GM23248 (cell line): ENCODE measurements at regions of chr1 and their contacts with region 1.

Region 1: DNA sequence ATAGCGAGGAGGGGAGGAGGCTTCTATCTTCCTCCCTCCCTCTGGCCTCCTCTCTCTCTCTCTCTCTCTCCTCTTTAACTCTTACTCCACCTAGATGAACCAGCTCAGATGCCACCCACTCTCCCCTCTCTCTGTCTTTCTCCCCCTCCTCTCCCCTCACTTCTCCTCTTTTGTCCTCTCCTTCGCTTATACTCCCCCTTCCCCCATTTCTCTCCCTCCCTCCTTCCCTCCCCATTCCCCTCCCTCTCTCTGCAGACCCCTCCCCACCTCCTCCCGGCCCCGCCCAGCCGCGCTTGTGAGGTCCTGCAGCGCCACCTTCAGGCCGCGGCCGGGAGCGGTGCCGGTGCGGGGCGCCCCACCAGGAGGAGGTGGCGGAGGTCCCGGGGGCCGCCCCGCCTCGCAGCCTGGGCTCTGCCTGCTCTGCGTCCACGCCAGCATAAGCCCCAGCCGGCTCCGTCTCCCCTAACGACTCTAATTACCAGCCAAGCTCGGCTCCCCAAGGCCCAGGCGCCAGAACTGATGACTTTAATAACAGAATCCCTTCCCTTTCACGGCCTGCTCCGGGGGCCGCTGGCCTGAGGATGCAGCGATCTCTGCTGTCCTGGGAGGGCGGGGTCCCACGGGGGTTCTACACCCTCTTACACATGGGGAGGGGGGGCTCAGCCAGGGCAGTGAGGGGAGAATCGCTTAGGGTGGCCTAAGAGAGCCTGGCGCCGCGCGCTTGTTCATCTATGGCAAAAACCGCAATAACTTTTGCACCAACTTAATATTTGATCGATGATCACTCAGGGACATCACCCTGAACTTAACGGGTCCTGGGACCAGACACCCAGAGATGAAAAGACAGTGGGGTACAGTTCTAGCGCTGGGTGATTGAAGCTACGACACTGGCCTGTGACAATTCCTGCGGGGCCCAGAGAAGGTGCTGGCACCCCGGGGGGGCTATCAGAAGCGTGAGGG is 637.3 kb downstream of the MATN1 start:
- DNase-seq: peak; percentile 50
- H3K4me3 ChIP-seq: peak overlapping the region; percentile 58
- H3K27ac ChIP-seq: no peak overlapping the region
- H3K4me1 ChIP-seq: peaks cover 14% of the 10 kb centered on the region
- H3K27me3 ChIP-seq: no peaks in the 10 kb centered on the region

Region 2: DNA sequence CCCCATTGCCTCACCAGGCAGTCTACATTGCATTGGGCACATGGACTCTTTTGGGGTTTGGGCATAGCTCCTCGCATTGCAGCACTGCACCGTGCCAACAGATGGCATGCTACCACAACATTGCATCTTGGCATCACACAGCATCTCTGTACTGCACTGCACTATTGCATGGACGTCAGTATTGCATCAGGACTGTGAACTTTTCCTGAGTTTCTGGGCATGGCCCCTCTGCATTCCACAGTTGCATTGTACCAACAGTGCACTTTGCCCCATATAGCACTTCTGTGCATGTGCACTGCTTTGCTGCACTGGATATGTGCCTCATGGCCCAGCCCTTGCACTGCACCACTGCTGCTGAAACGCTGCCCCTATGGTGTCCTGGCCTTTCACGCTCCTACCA is 840.2 kb before region 1 on chr1:
- in situ Hi-C with region 1: loop called (anchors 10 kb)
- DNase-seq: peak; percentile 39
- H3K4me3 ChIP-seq: no peak overlapping the region
- H3K27ac ChIP-seq: no peak overlapping the region
- H3K4me1 ChIP-seq: no peaks in the 10 kb centered on the region
- H3K27me3 ChIP-seq: no peaks in the 10 kb centered on the region

Region 3: DNA sequence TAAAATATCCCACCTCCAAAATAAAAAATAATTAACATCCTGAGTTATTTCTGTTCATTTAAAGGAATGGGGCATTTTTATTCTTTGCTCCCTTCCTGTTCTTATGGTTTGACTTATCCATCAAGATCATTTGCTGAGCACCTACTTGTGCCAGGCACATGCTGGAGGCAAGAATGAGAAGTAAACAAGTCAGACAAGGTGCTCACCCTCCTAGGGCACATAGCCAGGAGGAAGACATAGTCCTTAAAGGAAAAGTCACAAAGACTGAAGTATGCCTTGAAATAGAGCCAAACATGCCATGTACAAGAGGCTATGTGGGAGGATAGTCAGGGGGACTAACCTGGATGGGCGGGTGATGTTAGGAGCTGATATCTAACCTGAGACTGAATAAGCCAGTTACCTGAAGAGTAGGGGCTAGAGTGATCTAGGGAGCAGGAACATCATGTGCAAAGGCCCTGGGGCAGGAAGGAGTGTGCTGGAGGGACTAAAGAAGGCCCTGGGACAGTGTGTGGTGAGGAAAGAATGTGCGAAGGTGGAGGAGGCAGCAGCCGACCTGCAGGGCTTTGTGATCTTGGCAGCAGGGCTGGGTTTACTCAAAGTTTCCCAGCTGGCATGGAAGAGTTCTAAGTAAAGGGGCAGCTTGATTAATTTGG is 403.8 kb after region 1 on chr1:
- in situ Hi-C with region 1: no loop called
- DNase-seq: no peak
- H3K4me3 ChIP-seq: no peak overlapping the region
- H3K27ac ChIP-seq: no peak overlapping the region
- H3K4me1 ChIP-seq: no peaks in the 10 kb centered on the region
- H3K27me3 ChIP-seq: no peaks in the 10 kb centered on the region